ENCODE measurements at regions of chr21 and their contacts with region 1.

Region 1: DNA sequence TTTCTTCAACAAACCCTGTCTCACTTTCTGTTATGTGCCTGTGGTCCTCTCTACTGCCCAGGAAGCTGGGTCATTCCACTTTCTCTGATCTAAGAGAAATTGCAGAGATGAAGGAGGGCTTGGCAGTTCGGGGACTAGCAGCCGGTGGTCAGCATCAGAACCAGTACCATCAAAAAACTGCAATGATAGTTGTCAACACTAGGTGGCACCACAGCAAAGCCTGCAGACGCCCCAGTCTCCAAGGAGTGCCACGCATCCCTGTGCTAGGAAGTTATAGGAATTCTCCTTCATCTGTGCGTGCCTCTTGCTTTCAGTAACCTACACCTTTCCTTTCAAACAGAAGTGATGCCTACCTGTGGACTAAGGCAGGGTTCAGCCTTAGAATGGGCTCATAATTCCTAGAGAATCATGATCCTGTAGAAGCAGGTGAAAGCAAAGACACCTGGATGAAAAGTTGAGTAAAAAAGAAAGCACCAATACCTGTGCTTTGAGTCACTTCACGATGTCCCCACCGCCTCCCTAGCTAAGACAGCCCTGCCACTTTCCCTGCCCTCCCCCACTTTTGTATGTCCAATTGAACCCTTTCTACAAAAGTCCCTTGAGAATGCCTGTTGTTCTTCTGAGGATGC is 129.2 kb downstream of the ADAMTS1 start:
- DNase-seq: peak; percentile 37 to 43
- H3K4me3 ChIP-seq: no peak overlapping the region
- H3K4me3 Mint-ChIP-seq: no peak overlapping the region
- H3K27ac Mint-ChIP-seq: peak overlapping the region; percentile 44
- H3K4me1 ChIP-seq: peaks cover 5% of the 10 kb centered on the region; the same call in 1 of the 2 replicates
- H3K4me1 Mint-ChIP-seq: peaks cover 15% of the 10 kb centered on the region
- H3K27me3 ChIP-seq: no peaks in the 10 kb centered on the region
- H3K27me3 Mint-ChIP-seq: no peaks in the 10 kb centered on the region
- CTCF ChIP-seq: peak; percentile 52 to 56

Region 2: GRCh38 chr21:26679284-26679683 is 36.7 kb before region 1 on chr21:
- CTCF ChIA-PET with region 1: no interaction called
- POLR2A ChIA-PET with region 1: no interaction called
- intact Hi-C with region 1: loop called (anchors 2 kb)
- DNase-seq: no peak
- H3K4me3 ChIP-seq: no peak overlapping the region
- H3K4me3 Mint-ChIP-seq: no peak overlapping the region
- H3K27ac Mint-ChIP-seq: no peak overlapping the region
- H3K4me1 ChIP-seq: peaks cover 9% of the 10 kb centered on the region; the same call in 1 of the 2 replicates
- H3K4me1 Mint-ChIP-seq: no peaks in the 10 kb centered on the region
- H3K27me3 ChIP-seq: no peaks in the 10 kb centered on the region
- H3K27me3 Mint-ChIP-seq: no peaks in the 10 kb centered on the region
- CTCF ChIP-seq: no peak

Region 3: GRCh38 chr21:26698416-26698815 is 17.6 kb before region 1 on chr21:
- CTCF ChIA-PET with region 1: no interaction called
- POLR2A ChIA-PET with region 1: no interaction called
- intact Hi-C with region 1: no loop called
- DNase-seq: no peak
- H3K4me3 ChIP-seq: no peak overlapping the region
- H3K4me3 Mint-ChIP-seq: no peak overlapping the region
- H3K27ac Mint-ChIP-seq: no peak overlapping the region
- H3K4me1 ChIP-seq: no peaks in the 10 kb centered on the region
- H3K4me1 Mint-ChIP-seq: no peaks in the 10 kb centered on the region
- H3K27me3 ChIP-seq: no peaks in the 10 kb centered on the region
- H3K27me3 Mint-ChIP-seq: no peaks in the 10 kb centered on the region
- CTCF ChIP-seq: no peak